HCT116 (cell line): ENCODE measurements at regions of chr3 and their contacts with region 1.

Region 1: DNA sequence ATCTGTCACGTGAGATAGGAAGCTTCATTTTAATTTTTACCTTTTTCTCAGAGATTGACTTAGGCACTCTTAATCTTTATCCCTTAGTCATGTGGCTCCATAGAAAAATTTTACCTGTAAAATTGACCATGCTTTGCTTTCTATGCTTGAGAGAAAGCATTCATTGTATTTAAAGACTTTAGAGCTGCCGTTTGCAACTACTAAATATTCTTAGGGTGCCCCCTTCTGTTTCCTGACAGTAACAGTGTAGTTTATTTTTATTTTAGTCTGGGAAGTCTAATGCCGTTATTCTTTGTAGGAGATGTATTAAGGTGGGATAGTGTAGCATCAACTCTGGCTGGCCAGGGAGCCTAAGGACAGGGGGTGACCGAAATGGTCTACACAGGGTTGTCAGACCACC is 84.5 kb upstream of the SYNPR start:
- DNase-seq: peak; percentile 3
- ATAC-seq: peak; percentile 44; the same call in 1 of the 2 replicates
- H3K4me3 ChIP-seq: no peak overlapping the region
- H3K27ac ChIP-seq: no peak overlapping the region
- H3K4me1 ChIP-seq: no peaks in the 10 kb centered on the region
- H3K27me3 ChIP-seq: no peaks in the 10 kb centered on the region
- CTCF ChIP-seq: peak; percentile 5 to 47 (median 45); a peak in 3 of 6 replicates
- POLR2A ChIP-seq: no peak
- RAD21 ChIP-seq: peak; percentile 65

Region 2: GRCh38 chr3:62833531-62833930 is 360.1 kb before region 1 on chr3:
- CTCF ChIA-PET with region 1: no interaction called
- POLR2A ChIA-PET with region 1: no interaction called
- RAD21 ChIA-PET with region 1: no interaction called
- intact Hi-C with region 1: loop called (anchors 2 kb)
- DNase-seq: no peak
- ATAC-seq: no peak
- H3K4me3 ChIP-seq: no peak overlapping the region
- H3K27ac ChIP-seq: no peak overlapping the region
- H3K4me1 ChIP-seq: no peaks in the 10 kb centered on the region
- H3K27me3 ChIP-seq: peaks cover 10% of the 10 kb centered on the region; the same call in 1 of the 2 replicates
- CTCF ChIP-seq: peak; percentile 15 to 40 (median 29); a peak in 2 of 6 replicates
- POLR2A ChIP-seq: no peak
- RAD21 ChIP-seq: peak; percentile 46

Region 3: DNA sequence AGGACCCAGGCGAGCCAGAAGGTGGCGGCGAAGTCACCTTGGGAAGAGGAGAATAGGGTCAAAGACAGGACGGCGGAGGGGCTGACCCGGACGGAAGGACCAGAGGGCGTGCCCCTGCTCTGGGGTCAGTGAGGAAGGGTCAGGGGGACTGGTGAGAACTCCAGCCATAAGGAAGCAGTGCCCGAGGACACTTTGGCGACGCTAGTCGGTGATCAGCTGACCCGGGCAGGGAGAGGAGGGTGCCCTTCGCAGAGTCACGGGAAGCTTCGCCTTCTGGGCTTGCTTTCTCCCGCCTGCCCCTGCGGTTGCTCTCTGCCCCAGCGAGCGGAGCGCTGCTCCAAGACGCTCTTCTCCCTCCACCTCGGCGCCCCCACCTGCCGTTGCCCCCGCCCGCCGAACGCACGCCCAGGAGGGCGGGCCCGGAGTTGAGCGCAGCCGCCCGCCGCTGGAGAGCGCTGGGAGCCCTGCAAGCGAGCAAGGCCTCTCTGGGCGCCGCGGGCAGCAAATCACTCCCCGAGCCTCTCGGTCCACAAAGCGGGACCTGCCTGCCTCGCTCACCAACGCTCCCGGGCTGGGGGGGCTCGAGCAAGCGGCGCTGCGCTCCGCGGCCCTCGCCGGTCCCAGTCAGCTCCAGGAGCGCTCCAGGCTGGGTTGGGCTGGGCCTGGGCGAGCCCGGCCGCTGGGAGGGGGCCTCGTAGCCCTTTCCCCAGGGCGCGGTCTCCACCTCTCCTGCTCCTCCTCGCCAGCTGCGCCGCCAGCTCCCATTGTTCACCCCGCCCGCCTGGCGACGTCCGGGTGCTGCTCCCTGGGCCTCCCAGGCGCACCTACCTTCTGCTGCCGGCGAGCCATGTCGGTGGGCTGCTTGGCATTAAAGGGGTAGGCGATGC is 319.6 kb before region 1 on chr3:
- CTCF ChIA-PET with region 1: no interaction called
- POLR2A ChIA-PET with region 1: no interaction called
- RAD21 ChIA-PET with region 1: no interaction called
- intact Hi-C with region 1: loop called (anchors 10 kb)
- DNase-seq: no peak
- ATAC-seq: peak; percentile 55; the same call in 1 of the 2 replicates
- H3K4me3 ChIP-seq: no peak overlapping the region
- H3K27ac ChIP-seq: no peak overlapping the region
- H3K4me1 ChIP-seq: no peaks in the 10 kb centered on the region
- H3K27me3 ChIP-seq: no peaks in the 10 kb centered on the region
- CTCF ChIP-seq: peak; percentile 6 to 43 (median 27); a peak in 3 of 6 replicates
- POLR2A ChIP-seq: no peak
- RAD21 ChIP-seq: peak; percentile 39; the same call in 1 of the 2 replicates

Region 4: GRCh38 chr3:63167113-63167512 is 26.5 kb before region 1 on chr3:
- CTCF ChIA-PET with region 1: no interaction called
- POLR2A ChIA-PET with region 1: no interaction called
- RAD21 ChIA-PET with region 1: no interaction called
- intact Hi-C with region 1: no loop called
- DNase-seq: no peak
- ATAC-seq: no peak
- H3K4me3 ChIP-seq: no peak overlapping the region
- H3K27ac ChIP-seq: no peak overlapping the region
- H3K4me1 ChIP-seq: no peaks in the 10 kb centered on the region
- H3K27me3 ChIP-seq: no peaks in the 10 kb centered on the region
- CTCF ChIP-seq: no peak
- POLR2A ChIP-seq: no peak
- RAD21 ChIP-seq: no peak

Region 5: DNA sequence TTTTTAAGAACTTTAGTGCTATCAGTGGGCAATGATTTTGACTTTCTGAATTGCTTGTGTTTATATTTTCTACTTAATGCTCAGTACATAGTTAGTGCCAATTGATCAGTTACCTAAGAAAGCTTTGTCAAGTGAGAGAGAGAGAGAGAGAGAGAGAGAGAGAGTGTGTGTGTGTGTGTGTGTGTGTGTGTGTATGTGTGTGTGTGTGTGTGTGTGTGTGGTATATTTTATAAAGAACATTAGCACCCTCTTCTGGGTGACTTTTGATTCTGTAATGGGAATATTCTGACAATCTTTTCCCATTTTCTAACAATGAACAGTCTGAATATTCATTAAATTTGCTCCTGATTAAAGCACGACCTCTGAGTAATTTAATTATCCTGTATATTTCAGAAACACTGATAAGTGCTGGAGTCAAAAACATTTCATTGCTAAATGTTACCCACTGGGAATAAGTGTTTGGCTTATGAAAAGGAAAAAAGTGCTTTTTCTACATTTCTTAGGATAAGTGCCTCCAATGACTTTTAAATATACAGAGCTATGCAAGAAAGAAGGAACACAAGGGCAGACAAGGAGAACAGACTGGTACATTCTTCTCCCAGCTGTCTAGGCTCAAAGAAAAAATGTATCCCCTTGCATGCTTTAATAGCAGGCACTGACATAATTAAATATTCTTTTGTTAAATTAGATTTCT is 52.1 kb after region 1 on chr3:
- CTCF ChIA-PET with region 1: no interaction called
- POLR2A ChIA-PET with region 1: no interaction called
- RAD21 ChIA-PET with region 1: no interaction called
- intact Hi-C with region 1: no loop called
- DNase-seq: no peak
- ATAC-seq: no peak
- H3K4me3 ChIP-seq: no peak overlapping the region
- H3K27ac ChIP-seq: no peak overlapping the region
- H3K4me1 ChIP-seq: no peaks in the 10 kb centered on the region
- H3K27me3 ChIP-seq: no peaks in the 10 kb centered on the region; the same call in 1 of the 2 replicates
- CTCF ChIP-seq: no peak
- POLR2A ChIP-seq: no peak
- RAD21 ChIP-seq: peak; percentile 27